ENCODE measurements at regions of chr15 and their contacts with region 1.

Region 1: DNA sequence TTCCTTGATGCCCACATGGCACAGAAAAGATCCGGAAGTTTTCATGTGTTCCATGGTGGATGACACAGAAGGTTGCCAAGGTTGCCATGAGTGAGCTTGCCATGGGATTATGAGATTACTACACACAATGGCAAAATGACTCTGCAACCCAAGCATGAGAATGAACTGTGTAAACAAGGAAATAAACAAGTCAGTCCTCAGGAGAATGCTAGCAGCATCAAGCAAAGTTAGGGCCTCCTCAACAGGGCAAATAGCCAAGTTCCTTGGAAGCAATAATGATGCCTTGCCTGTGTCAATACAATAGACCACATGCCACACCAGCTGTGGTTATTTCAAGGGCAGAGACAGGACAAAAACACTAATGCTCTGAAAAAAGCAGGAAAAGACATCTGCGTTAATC is 41.8 kb downstream of the AQR start:
- DNase-seq: no peak
- H3K4me3 ChIP-seq: no peak overlapping the region
- H3K4me3 Mint-ChIP-seq: no peak overlapping the region
- H3K27ac ChIP-seq: peak overlapping the region in 1 of 2 donors; percentile 1
- H3K27ac Mint-ChIP-seq: no peak overlapping the region
- H3K4me1 ChIP-seq: no peaks in the 10 kb centered on the region
- H3K4me1 Mint-ChIP-seq: no peaks in the 10 kb centered on the region
- H3K27me3 ChIP-seq: no peaks in the 10 kb centered on the region
- H3K27me3 Mint-ChIP-seq: no peaks in the 10 kb centered on the region
- CTCF ChIP-seq: no peak

Region 2: GRCh38 chr15:34879107-34879506 is 48.6 kb before region 1 on chr15:
- intact Hi-C with region 1: loop called in 1 of 2 experiments (anchors 10 kb)
- DNase-seq: no peak
- H3K4me3 ChIP-seq: no peak overlapping the region
- H3K4me3 Mint-ChIP-seq: no peak overlapping the region
- H3K27ac ChIP-seq: no peak overlapping the region
- H3K27ac Mint-ChIP-seq: no peak overlapping the region
- H3K4me1 ChIP-seq: no peaks in the 10 kb centered on the region
- H3K4me1 Mint-ChIP-seq: no peaks in the 10 kb centered on the region
- H3K27me3 ChIP-seq: no peaks in the 10 kb centered on the region
- H3K27me3 Mint-ChIP-seq: peaks cover 0 to 2% (median 0%) of the 10 kb centered on the region in 3 donors
- CTCF ChIP-seq: no peak